ENCODE measurements at regions of chr11 and their contacts with region 1.

Region 1: GRCh38 chr11:73141848-73142286 is 251 bp downstream of the FCHSD2 start:
- DNase-seq: peak; percentile 61
- H3K4me3 Mint-ChIP-seq: peak overlapping the region; percentile 99
- H3K27ac Mint-ChIP-seq: peak overlapping the region; percentile 96
- H3K4me1 Mint-ChIP-seq: peaks cover 56% of the 10 kb centered on the region
- H3K27me3 Mint-ChIP-seq: no peaks in the 10 kb centered on the region

Region 2: GRCh38 chr11:72814286-72815109 is 327.4 kb before region 1 on chr11 and contains the start of gene ATG16L2:
- intact Hi-C with region 1: loop called (anchors 1 kb)
- DNase-seq: peak; percentile 90
- H3K4me3 Mint-ChIP-seq: peak within 1 kb of the TSS; percentile 99
- H3K27ac Mint-ChIP-seq: peak within 1 kb of the TSS; percentile 98
- H3K4me1 Mint-ChIP-seq: peaks cover 54% of the 10 kb centered on the region
- H3K27me3 Mint-ChIP-seq: no peaks in the 10 kb centered on the region
- total RNA-seq, gene ATG16L2: 69.2 and 71.1 TPM in 2 replicates

Region 3: DNA sequence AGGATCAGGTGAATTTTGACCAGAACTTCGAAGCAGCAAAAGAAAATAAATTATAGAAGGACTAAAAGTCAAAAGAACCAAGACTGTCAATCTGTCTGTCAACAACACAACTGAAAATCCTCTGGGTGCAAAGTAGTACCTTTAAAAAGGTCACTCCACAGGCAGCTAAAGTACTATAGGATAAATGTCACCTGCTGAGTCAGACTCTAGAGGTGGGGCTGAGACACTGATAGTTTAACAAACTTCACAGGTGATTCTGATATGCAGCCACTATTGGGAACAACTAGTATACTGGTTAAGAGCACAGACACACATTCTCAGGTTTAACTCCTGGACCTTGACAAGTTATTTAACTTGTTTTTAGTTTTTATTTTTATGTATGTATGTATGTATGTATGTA is 107.1 kb before region 1 on chr11:
- intact Hi-C with region 1: loop called (anchors 1 kb)
- DNase-seq: no peak
- H3K4me3 Mint-ChIP-seq: peak overlapping the region; percentile 45
- H3K27ac Mint-ChIP-seq: peak overlapping the region; percentile 83
- H3K4me1 Mint-ChIP-seq: peaks cover 21% of the 10 kb centered on the region
- H3K27me3 Mint-ChIP-seq: no peaks in the 10 kb centered on the region

Region 4: GRCh38 chr11:73252577-73253195 is 110.8 kb after region 1 on chr11:
- intact Hi-C with region 1: loop called (anchors 5 kb)
- DNase-seq: no peak
- H3K4me3 Mint-ChIP-seq: no peak overlapping the region
- H3K27ac Mint-ChIP-seq: no peak overlapping the region
- H3K4me1 Mint-ChIP-seq: no peaks in the 10 kb centered on the region
- H3K27me3 Mint-ChIP-seq: peaks cover 2% of the 10 kb centered on the region

Region 5: GRCh38 chr11:73274752-73275743 is 133.2 kb after region 1 on chr11:
- intact Hi-C with region 1: no loop called
- DNase-seq: no peak
- H3K4me3 Mint-ChIP-seq: no peak overlapping the region
- H3K27ac Mint-ChIP-seq: no peak overlapping the region
- H3K4me1 Mint-ChIP-seq: no peaks in the 10 kb centered on the region
- H3K27me3 Mint-ChIP-seq: peaks cover 21% of the 10 kb centered on the region

Region 6: DNA sequence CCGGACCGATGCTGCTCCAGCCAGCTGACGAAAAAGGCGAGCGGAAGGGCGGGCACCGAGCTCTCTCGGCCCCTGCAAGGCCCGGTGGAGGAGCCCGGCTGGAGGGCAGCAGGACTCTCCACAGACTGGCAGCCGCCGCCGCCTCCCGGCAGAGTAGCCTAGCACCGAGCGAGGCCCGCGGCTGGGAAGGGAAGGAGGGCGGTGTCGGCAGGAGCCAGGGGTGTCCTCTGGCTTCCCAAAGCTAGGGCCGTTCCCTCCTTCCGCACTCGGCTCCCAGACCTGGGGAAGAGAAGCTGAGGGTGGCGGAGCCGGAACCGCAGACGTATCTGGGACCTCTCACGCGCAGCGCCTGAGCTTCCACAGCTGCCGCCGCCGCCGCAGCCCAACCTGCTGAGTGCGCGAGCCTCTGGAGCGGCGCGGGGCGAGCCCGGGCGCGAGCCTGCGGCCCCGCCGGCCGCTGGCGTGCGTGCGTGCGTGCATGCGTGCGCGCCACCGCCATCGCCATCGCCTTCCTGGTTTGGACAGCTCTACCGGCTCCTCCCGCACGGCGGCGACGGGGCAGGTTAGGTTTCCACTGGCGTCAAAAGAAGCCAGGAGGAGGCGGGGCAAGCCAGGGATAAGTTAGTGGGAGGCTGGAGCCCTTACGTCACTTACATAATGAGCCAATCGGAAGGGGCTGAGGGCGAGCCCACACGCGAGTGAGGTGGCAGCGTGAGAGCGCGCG is 619.0 kb after region 1 on chr11 and contains the start of gene RAB6A:
- intact Hi-C with region 1: loop called (anchors 5 kb)
- DNase-seq: peak; percentile 100
- H3K4me3 Mint-ChIP-seq: peak within 1 kb of the TSS; percentile 98
- H3K27ac Mint-ChIP-seq: peak within 1 kb of the TSS; percentile 97
- H3K4me1 Mint-ChIP-seq: peaks cover 41% of the 10 kb centered on the region
- H3K27me3 Mint-ChIP-seq: peaks cover 3% of the 10 kb centered on the region
- total RNA-seq, gene RAB6A: 81.9 and 88.0 TPM in 2 replicates

Measured in activated T-helper 1 cell treated with anti-CD3 and anti-CD28 coated beads, Interleukin-12 subunit alpha, Interleukin-12 subunit beta, Interleukin-2, Interleukin-4 antibody, amounts not matched to agents 30 ng/mL and 10 ng/mL and 1 ng/mL, durations not matched to agents 14 hours and 24 hours and 36 hours (primary cell).